Heart left ventricle (tissue), 16 donors: ENCODE measurements at regions of chr1 and their contacts with region 1.

Region 1: DNA sequence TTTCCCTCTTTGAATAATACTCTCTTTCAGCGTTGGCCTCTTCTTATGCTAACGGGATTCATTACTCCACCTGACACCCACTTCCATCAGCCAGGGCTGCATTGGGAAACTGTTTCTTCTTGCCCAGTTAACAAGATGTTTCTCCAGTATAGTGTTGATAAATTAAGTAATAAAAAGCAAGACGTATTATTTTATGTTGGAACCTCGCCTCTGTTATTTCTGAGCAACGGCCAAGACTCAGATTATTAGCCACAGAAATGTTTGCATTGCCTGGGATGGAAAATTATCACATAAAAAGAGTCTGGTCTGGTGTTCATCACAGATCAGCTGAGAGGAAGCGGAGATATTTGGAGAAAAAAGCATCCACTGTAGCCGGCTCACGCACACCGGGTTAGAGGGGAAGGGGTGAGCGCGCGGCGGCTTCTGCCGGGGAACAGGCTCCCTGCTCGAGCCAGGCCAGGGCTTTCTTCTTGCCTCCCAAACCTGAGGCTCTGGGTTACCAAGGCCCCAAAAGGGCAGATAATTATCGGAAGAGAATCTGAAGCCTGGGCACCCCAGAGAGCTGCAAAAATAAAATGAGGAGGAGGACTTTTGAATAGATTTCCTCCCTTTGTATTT is 189.5 kb downstream of the PRDM16 start:
- DNase-seq: no peak
- ATAC-seq: no peak
- H3K4me3 ChIP-seq: no peak overlapping the region
- H3K27ac ChIP-seq: peak overlapping the region in 2 of 12 donors; percentile 6 to 10
- H3K4me1 ChIP-seq: peaks cover 0 to 32% (median 0%) of the 10 kb centered on the region in 12 donors
- H3K27me3 ChIP-seq: peaks cover 0 to 2% (median 0%) of the 10 kb centered on the region in 9 donors
- CTCF ChIP-seq: no peak
- POLR2A ChIP-seq: no peak

Region 2: DNA sequence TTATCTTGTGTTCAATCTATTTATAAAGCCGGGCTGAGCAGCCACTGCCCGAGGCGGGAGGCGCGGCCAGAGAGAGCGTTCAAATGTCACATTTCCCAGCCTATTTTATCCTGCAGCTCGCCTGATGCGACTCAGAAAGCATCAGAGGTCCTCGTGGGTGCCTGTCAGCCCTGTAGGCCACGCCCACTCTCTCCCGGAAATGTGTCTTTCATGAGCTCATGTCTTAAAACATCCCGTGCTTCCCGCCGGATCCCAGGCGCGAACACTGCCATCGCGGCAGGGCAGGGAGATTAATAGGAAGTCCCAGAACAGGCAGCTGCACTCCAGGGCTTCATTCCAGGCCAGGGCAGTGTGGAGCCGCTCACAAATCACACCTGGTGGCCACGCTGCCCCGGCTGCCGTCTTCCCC is 72.0 kb before region 1 on chr1:
- intact Hi-C with region 1: loop called in 1 of 10 experiments (anchors 2 kb)
- DNase-seq: peak in 4 of 5 donors; percentile 84 to 92 (median 89)
- ATAC-seq: peak; percentile 61 to 90 (median 76)
- H3K4me3 ChIP-seq: peak overlapping the region in 1 of 12 donors; percentile 10
- H3K27ac ChIP-seq: peak overlapping the region; percentile 12 to 92 (median 76)
- H3K4me1 ChIP-seq: peaks cover 0 to 43% (median 25%) of the 10 kb centered on the region in 12 donors
- H3K27me3 ChIP-seq: peaks cover 0 to 20% (median 0%) of the 10 kb centered on the region in 9 donors
- CTCF ChIP-seq: no peak
- POLR2A ChIP-seq: no peak

Region 3: DNA sequence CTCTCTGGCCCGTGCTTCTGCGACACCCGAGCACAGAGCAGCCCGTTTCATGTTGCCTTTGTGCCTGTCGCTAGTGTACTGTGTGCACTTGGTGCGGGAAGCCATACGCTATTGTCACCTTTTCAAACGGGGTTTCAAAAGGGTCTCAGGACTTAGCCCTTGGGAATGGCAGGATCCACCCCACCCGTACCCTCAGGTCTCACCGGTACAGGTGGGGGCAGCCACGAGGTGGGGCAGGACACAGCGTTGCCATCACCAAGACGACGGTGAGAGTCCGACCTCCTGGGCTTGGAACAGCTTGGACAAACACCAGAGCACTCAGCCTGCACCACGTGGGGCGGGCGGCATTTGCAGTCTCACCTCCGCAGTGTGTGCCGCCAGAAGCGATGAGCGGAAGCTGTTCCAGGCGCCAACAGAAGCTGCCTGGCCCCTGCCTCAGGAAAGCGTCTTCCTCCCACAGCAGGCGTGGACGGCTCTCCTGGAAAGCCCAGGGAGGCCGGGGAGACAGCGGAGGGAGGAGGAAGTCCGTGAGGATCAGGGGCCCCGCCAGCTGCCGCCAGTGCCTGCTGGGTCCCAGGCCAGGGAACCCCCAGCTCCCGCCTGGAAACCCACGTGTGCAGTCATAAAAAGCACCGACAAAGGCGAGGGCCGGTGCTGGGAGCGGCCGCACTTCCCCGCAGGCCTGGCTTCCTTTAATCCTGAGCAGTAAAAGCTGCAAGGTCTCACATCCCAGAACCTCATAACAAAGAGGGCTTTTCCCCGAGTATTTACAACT is 64.7 kb after region 1 on chr1:
- intact Hi-C with region 1: no loop called
- DNase-seq: peak in 4 of 5 donors; percentile 54 to 76 (median 67)
- ATAC-seq: peak; percentile 54 to 79 (median 60)
- H3K4me3 ChIP-seq: no peak overlapping the region
- H3K27ac ChIP-seq: peak overlapping the region in 10 of 12 donors; percentile 7 to 72 (median 52)
- H3K4me1 ChIP-seq: peaks cover 4 to 50% (median 21%) of the 10 kb centered on the region in 12 donors
- H3K27me3 ChIP-seq: peaks cover 0 to 8% (median 0%) of the 10 kb centered on the region in 9 donors
- CTCF ChIP-seq: no peak
- POLR2A ChIP-seq: no peak